Activated T-helper 2 cell treated with anti-CD3 and anti-CD28 coated beads, Interferon-gamma antibody, Interleukin-2, Interleukin-4, amounts not matched to agents 10 μg/mL and 5 μg/mL and 100 μg/mL, durations not matched to agents 14 hours and 24 hours and 36 hours (primary cell): ENCODE measurements at regions of chr2 and their contacts with region 1.

Region 1: DNA sequence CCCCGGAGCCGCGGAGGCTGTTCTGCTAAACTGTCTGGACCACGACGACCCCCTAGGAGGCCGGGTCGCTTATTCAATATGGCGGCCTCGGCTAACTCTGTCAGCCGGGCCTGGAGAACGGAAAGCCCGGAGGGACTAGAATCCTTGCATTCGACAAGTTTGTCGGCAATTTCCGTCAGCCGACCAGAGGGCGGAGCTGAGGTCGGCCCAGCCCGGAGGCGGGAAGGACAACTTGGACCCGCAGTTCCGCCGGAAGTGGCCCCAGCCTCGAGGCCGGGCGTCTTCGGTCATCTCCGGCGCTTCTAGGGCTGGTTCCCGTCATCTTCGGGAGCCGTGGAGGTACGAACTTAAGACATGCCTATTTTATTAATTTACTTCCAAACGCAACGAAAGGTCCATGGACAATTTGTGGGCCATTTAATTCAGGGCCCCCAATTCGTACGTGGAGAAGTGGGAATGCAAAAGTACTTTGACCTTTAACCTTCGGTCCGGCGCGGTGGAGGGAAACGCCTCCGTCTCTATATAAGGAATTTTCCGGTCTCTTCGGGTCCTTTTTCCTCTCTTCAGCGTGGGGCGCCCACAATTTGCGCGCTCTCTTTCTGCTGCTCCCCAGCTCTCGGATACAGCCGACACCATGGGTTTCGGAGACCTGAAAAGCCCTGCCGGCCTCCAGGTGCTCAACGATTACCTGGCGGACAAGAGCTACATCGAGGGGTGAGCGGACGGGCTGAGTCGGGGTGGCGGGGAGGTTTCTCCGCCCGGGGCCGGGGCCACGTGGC is at the starts of genes EEF1B2 and NDUFS1:
- DNase-seq: peak; percentile 96
- H3K4me3 Mint-ChIP-seq: peak within 1 kb of the TSS; percentile 98
- H3K27ac Mint-ChIP-seq: peak within 1 kb of the TSS; percentile 98
- H3K4me1 Mint-ChIP-seq: peaks cover 36% of the 10 kb centered on the region
- H3K27me3 Mint-ChIP-seq: no peaks in the 10 kb centered on the region
- total RNA-seq, gene EEF1B2: 719 and 724 TPM in 2 replicates
- total RNA-seq, gene NDUFS1: 80.7 and 84.3 TPM in 2 replicates

Region 2: GRCh38 chr2:206031162-206031784 is 128.3 kb before region 1 on chr2:
- intact Hi-C with region 1: loop called (anchors 2 kb)
- DNase-seq: no peak
- H3K4me3 Mint-ChIP-seq: no peak overlapping the region
- H3K27ac Mint-ChIP-seq: peak overlapping the region; percentile 33
- H3K4me1 Mint-ChIP-seq: peaks cover 44% of the 10 kb centered on the region
- H3K27me3 Mint-ChIP-seq: no peaks in the 10 kb centered on the region

Region 3: GRCh38 chr2:206289391-206289790 is 129.9 kb after region 1 on chr2:
- intact Hi-C with region 1: no loop called
- DNase-seq: no peak
- H3K4me3 Mint-ChIP-seq: no peak overlapping the region
- H3K27ac Mint-ChIP-seq: no peak overlapping the region
- H3K4me1 Mint-ChIP-seq: no peaks in the 10 kb centered on the region
- H3K27me3 Mint-ChIP-seq: no peaks in the 10 kb centered on the region

Region 4: GRCh38 chr2:206442833-206443734 is 283.5 kb after region 1 on chr2 and contains the start of gene ADAM23:
- intact Hi-C with region 1: loop called (anchors 10 kb)
- DNase-seq: peak; percentile 27
- H3K4me3 Mint-ChIP-seq: peak within 1 kb of the TSS; percentile 83
- H3K27ac Mint-ChIP-seq: no peak within 1 kb of the TSS
- H3K4me1 Mint-ChIP-seq: peaks cover 6% of the 10 kb centered on the region
- H3K27me3 Mint-ChIP-seq: peaks cover 74% of the 10 kb centered on the region
- total RNA-seq, gene ADAM23: 0.23 and 0.25 TPM in 2 replicates